BJ (cell line): ENCODE measurements at regions of chr21 and their contacts with region 1.

Region 1: GRCh38 chr21:31900121-31900895 is 27.5 kb downstream of the HUNK start:
- DNase-seq: no peak
- H3K4me3 ChIP-seq: no peak overlapping the region
- H3K27me3 ChIP-seq: no peaks in the 10 kb centered on the region
- CTCF ChIP-seq: no peak

Region 2: GRCh38 chr21:31426235-31426797 is 474.0 kb before region 1 on chr21:
- CTCF ChIA-PET with region 1: no interaction called
- POLR2A ChIA-PET with region 1: no interaction called
- DNase-seq: no peak
- H3K4me3 ChIP-seq: no peak overlapping the region
- H3K27me3 ChIP-seq: no peaks in the 10 kb centered on the region
- CTCF ChIP-seq: no peak

Region 3: GRCh38 chr21:31911138-31911907 is 11.0 kb after region 1 on chr21:
- CTCF ChIA-PET with region 1: no interaction called
- POLR2A ChIA-PET with region 1: no interaction called
- DNase-seq: peak; percentile 90
- H3K4me3 ChIP-seq: no peak overlapping the region
- H3K27me3 ChIP-seq: no peaks in the 10 kb centered on the region
- CTCF ChIP-seq: no peak

Region 4: GRCh38 chr21:31988492-31989290 is 88.4 kb after region 1 on chr21:
- CTCF ChIA-PET with region 1: no interaction called
- POLR2A ChIA-PET with region 1: interaction called, 32 read pairs
- DNase-seq: no peak
- H3K4me3 ChIP-seq: no peak overlapping the region
- H3K27me3 ChIP-seq: no peaks in the 10 kb centered on the region
- CTCF ChIP-seq: no peak

Region 5: GRCh38 chr21:32001390-32001789 is 101.1 kb after region 1 on chr21:
- CTCF ChIA-PET with region 1: no interaction called
- POLR2A ChIA-PET with region 1: no interaction called
- DNase-seq: no peak
- H3K4me3 ChIP-seq: no peak overlapping the region
- H3K27me3 ChIP-seq: no peaks in the 10 kb centered on the region
- CTCF ChIP-seq: no peak

Region 6: GRCh38 chr21:32070676-32071330 is 170.5 kb after region 1 on chr21:
- CTCF ChIA-PET with region 1: no interaction called
- POLR2A ChIA-PET with region 1: no interaction called
- DNase-seq: no peak
- H3K4me3 ChIP-seq: no peak overlapping the region
- H3K27me3 ChIP-seq: no peaks in the 10 kb centered on the region
- CTCF ChIP-seq: no peak